ENCODE measurements at regions of chr9 and their contacts with region 1.

Region 1: GRCh38 chr9:91036826-91037510 is 235.3 kb downstream of the SYK start:
- DNase-seq: peak; percentile 76 to 82 (median 78)
- ATAC-seq: peak; percentile 86 to 99 (median 98)
- H3K4me3 ChIP-seq: no peak overlapping the region
- H3K27ac ChIP-seq: no peak overlapping the region
- H3K4me1 ChIP-seq: peaks cover 0 to 20% (median 10%) of the 10 kb centered on the region in 12 donors
- H3K27me3 ChIP-seq: peaks cover 0 to 7% (median 0%) of the 10 kb centered on the region in 9 donors
- CTCF ChIP-seq: peak; percentile 55 to 78 (median 64)
- POLR2A ChIP-seq: no peak

Region 2: GRCh38 chr9:90890136-90890535 is 146.8 kb before region 1 on chr9:
- intact Hi-C with region 1: no loop called
- DNase-seq: no peak
- ATAC-seq: no peak
- H3K4me3 ChIP-seq: no peak overlapping the region
- H3K27ac ChIP-seq: no peak overlapping the region
- H3K4me1 ChIP-seq: no peaks in the 10 kb centered on the region
- H3K27me3 ChIP-seq: peaks cover 0 to 4% (median 0%) of the 10 kb centered on the region in 9 donors
- CTCF ChIP-seq: no peak
- POLR2A ChIP-seq: no peak

Region 3: DNA sequence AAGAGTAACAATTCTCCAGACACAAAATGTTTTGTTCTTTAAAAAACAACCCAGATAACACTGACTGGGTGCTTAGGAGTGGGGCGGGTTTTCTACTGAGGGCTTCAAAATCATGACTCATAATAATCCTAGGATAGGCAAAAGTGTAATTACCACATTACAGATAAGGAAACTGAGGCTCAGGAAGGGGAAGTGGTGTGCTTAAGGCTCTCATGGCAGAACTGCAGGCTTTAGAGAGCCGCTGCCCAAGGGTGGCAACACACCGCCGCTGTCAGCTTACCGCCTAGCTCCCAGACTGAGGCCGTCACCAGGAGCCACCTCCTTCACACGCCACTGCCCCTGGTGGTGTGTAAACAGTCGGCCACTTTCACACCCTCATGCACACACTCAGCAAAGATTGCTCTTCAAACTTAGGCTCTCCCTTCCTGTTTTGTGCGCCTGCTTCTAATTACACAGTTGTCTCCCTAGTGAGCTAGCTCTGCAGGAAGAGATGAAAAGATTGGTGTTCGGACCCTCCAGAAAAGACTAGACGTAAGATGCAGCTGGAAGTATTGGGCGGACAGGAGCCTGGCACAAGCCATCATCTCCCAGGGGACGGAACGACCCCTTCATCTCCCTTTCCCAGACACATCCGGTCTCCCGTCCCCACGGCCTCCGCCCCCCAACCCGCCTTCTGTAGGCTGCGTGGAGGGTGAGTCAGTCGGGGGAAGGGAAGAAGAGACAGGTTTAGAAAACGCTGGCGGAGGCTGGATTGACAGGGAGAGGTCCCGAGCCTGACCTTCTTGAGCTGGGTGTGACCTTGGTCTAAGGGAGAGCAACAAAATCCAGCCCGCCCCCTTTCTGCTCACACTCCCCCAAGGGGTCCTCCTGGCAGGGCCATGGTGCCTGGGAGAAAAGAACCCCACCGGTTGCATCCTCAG is 72.6 kb before region 1 on chr9:
- intact Hi-C with region 1: no loop called
- DNase-seq: no peak
- ATAC-seq: peak in 2 of 4 donors; percentile 35 to 73
- H3K4me3 ChIP-seq: peak overlapping the region in 2 of 12 donors; percentile 9 to 24
- H3K27ac ChIP-seq: peak overlapping the region in 1 of 12 donors; percentile 56
- H3K4me1 ChIP-seq: peaks cover 0 to 3% (median 0%) of the 10 kb centered on the region in 12 donors
- H3K27me3 ChIP-seq: peaks cover 0 to 21% (median 0%) of the 10 kb centered on the region in 9 donors
- CTCF ChIP-seq: peak in 4 of 12 donors; percentile 13 to 33 (median 23)
- POLR2A ChIP-seq: no peak

Region 4: GRCh38 chr9:91451519-91452270 is 414.7 kb after region 1 on chr9:
- intact Hi-C with region 1: no loop called
- DNase-seq: no peak
- ATAC-seq: no peak
- H3K4me3 ChIP-seq: no peak overlapping the region
- H3K27ac ChIP-seq: no peak overlapping the region
- H3K4me1 ChIP-seq: no peaks in the 10 kb centered on the region
- H3K27me3 ChIP-seq: peaks cover 0 to 6% (median 0%) of the 10 kb centered on the region in 9 donors
- CTCF ChIP-seq: no peak
- POLR2A ChIP-seq: no peak

Region 5: GRCh38 chr9:91681461-91682305 is 644.7 kb after region 1 on chr9:
- intact Hi-C with region 1: loop called in 2 of 10 experiments (anchors 5 kb)
- DNase-seq: peak; percentile 67 to 89 (median 79)
- ATAC-seq: peak; percentile 82 to 99 (median 96)
- H3K4me3 ChIP-seq: peak overlapping the region in 4 of 12 donors; percentile 15 to 33 (median 32)
- H3K27ac ChIP-seq: no peak overlapping the region
- H3K4me1 ChIP-seq: peaks cover 0 to 7% (median 0%) of the 10 kb centered on the region in 12 donors
- H3K27me3 ChIP-seq: peaks cover 0 to 7% (median 0%) of the 10 kb centered on the region in 9 donors
- CTCF ChIP-seq: peak; percentile 80 to 94 (median 86)
- POLR2A ChIP-seq: no peak

Measured in heart left ventricle (tissue), 16 donors.